SK-N-SH (cell line): ENCODE measurements at regions of chr2 and their contacts with region 1.

Region 1: DNA sequence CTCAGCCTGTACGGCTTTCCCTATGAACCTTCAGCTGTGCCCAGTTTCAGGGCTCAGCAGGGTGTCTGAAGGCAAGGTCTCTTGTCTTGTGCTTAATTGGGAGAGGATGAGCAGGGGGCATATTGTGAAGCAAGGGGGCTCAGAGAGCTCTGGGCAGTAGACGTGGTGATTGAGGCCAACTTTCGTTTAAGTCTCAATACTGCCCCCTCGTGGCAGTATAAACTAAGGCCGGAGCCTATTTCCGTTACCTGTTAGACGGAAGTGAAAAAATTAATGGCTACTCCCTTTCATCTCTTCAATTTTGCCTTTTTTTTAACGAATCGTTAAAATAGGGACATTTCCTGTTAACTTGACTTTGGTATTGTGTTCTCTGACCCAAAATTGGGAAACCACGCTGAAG is 193.4 kb downstream of the TDRD15 start:
- DNase-seq: peak; percentile 55
- H3K4me3 ChIP-seq: no peak overlapping the region; a peak in 1 of 4 replicates
- H3K27ac ChIP-seq: peak overlapping the region in 1 of 2 experiments; percentile 62; a peak in 2 of 4 replicates
- H3K4me1 ChIP-seq: peaks cover 0 to 6% of the 10 kb centered on the region in 2 experiments; a peak in 2 of 4 replicates
- H3K27me3 ChIP-seq: no peaks in the 10 kb centered on the region
- CTCF ChIP-seq: peak; percentile 57
- EP300 ChIP-seq: no peak
- RAD21 ChIP-seq: peak; percentile 88

Region 2: DNA sequence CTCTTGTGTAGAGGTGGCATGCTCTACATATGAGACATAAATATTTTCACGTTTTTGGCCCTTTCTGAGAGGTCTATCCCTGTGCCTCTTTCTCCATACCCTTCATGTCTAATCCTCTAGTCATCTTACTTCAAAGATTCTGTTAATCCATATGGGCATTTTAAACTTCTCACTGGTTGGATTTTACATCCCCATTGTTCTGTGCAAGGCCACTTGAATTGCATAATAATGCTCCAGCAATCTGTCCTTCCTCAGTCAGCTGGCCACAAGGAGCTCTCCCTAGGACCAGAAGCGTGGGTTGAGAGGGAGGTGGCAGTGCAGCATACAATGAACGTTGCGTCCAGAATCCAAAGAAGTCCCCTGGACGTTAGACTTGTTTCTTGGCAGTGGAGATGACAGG is 135.2 kb before region 1 on chr2:
- CTCF ChIA-PET with region 1: interaction called, 95 read pairs
- POLR2A ChIA-PET with region 1: no interaction called
- DNase-seq: no peak
- H3K4me3 ChIP-seq: no peak overlapping the region
- H3K27ac ChIP-seq: no peak overlapping the region
- H3K4me1 ChIP-seq: no peaks in the 10 kb centered on the region
- H3K27me3 ChIP-seq: no peaks in the 10 kb centered on the region
- CTCF ChIP-seq: no peak
- EP300 ChIP-seq: no peak
- RAD21 ChIP-seq: no peak

Region 3: DNA sequence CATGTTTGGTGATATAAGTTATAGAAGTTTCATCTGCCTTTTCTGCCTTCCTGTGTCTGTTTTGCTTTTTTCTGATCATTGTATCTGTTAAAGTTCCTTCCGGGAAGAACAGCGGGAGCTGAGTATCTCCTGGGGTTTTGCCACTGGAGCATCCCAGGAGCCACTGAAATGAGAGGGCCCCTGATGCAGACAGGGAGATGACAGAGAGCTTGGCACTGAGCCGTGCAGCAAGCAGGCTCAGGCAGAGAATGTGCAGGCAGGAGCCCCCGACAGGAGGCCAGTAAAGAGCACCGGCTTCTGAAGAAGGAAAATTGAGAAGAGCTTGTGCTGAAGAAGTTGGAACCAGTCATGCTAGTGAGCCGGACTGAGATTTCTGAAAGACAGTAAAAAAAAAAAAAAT is 55.5 kb before region 1 on chr2:
- CTCF ChIA-PET with region 1: interaction called, 14 read pairs
- POLR2A ChIA-PET with region 1: no interaction called
- DNase-seq: no peak
- H3K4me3 ChIP-seq: no peak overlapping the region
- H3K27ac ChIP-seq: peak overlapping the region in 1 of 2 experiments; percentile 81; a peak in 2 of 4 replicates
- H3K4me1 ChIP-seq: peaks cover 0 to 55% of the 10 kb centered on the region in 2 experiments; a peak in 2 of 4 replicates
- H3K27me3 ChIP-seq: no peaks in the 10 kb centered on the region
- CTCF ChIP-seq: no peak
- EP300 ChIP-seq: no peak
- RAD21 ChIP-seq: no peak

Region 4: GRCh38 chr2:21289989-21290388 is 27.1 kb before region 1 on chr2:
- CTCF ChIA-PET with region 1: interaction called, 13 read pairs
- POLR2A ChIA-PET with region 1: no interaction called
- DNase-seq: no peak
- H3K4me3 ChIP-seq: no peak overlapping the region
- H3K27ac ChIP-seq: no peak overlapping the region; a peak in 1 of 4 replicates
- H3K4me1 ChIP-seq: peaks cover 0 to 30% of the 10 kb centered on the region in 2 experiments; a peak in 2 of 4 replicates
- H3K27me3 ChIP-seq: no peaks in the 10 kb centered on the region
- CTCF ChIP-seq: no peak
- EP300 ChIP-seq: no peak
- RAD21 ChIP-seq: no peak

Region 5: DNA sequence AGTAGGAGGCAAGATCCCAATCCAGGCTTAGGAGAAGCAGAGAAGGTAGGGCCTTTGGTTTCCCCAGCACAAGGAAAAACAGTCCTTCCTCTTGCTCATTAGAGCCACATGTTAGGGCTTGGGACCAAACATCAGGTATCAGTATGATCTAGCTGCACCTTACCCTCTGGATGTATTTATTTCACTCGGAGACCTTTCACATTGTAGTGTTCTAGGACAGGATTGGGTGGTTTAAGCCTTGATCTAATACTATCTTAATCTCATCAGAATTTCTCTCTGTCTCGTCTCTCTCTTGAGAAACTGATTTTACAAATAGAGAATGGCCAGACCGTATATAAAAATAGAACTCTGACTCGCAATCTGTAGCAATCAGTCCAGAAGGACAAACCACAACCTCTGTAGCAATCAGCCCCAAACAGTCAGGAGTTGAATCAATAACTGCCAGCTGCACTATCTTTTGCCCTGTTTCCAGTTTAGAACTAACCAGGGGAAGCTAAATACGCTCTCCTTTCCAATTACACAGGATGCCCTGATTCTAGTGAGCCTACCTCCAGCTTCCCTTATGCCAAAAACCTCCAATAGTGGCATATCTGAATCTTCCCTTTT is 13.8 kb after region 1 on chr2:
- CTCF ChIA-PET with region 1: interaction called, 17 read pairs
- POLR2A ChIA-PET with region 1: no interaction called
- DNase-seq: no peak
- H3K4me3 ChIP-seq: no peak overlapping the region
- H3K27ac ChIP-seq: no peak overlapping the region
- H3K4me1 ChIP-seq: peaks cover 0 to 3% of the 10 kb centered on the region in 2 experiments; a peak in 1 of 4 replicates
- H3K27me3 ChIP-seq: no peaks in the 10 kb centered on the region
- CTCF ChIP-seq: no peak
- EP300 ChIP-seq: no peak
- RAD21 ChIP-seq: no peak